IMR-90 (cell line): ENCODE measurements at regions of chr3 and their contacts with region 1.

Region 1: GRCh38 chr3:64345371-64345770 is 120.1 kb upstream of the PRICKLE2 start:
- DNase-seq: peak; percentile 89
- ATAC-seq: peak; percentile 4
- H3K4me3 ChIP-seq: no peak overlapping the region
- H3K27ac ChIP-seq: peak overlapping the region; percentile 77
- H3K4me1 ChIP-seq: peaks cover 30% of the 10 kb centered on the region
- H3K27me3 ChIP-seq: no peaks in the 10 kb centered on the region
- CTCF ChIP-seq: no peak
- POLR2A ChIP-seq: no peak
- RAD21 ChIP-seq: no peak

Region 2: DNA sequence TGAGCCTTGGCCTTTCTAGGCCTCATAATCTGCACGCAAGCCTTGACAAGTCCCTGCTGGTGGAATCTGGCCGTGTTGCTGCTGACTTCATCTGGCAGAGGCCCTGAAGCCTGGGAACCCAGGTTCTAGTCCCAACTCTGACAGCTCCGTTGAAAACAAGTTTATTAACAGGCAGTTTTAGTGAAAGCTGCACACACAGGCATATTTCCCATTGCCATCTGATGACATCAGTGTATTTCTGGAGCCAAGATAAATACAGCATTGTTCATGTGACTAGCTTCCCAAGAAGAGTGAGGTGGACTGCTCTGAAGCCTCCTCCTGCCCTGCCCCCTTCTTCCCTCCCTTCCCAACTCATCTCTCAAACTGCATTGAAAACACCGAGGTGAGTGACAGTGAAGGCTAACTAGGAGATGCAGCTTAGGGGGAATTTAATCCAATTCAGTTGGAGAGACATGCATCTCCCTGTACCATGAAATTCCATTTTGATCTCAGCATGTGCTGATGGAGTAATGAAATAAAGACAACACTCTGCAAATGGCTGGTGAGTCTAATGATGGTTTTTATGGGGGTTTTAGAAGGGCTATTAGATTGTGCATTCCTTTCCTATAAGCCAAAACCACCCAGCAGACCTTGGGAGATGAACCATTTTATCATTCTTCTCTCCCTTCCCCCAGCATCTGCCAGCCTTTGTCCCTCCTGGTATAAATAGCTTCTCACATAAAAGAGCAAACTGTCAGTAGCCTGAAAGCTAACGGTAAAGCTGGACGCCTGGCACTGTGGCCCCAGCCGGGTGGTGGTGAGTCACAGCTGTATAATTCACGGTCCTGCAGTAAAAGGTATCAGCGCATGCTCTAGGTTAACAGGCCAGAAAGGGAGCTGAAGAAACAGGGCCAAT is 158.1 kb before region 1 on chr3:
- CTCF ChIA-PET with region 1: no interaction called
- POLR2A ChIA-PET with region 1: no interaction called
- dilution Hi-C with region 1: no loop called
- in situ Hi-C with region 1: no loop called
- intact Hi-C with region 1: loop called (anchors 5 kb)
- DNase-seq: peak; percentile 99
- ATAC-seq: peak; percentile 62
- H3K4me3 ChIP-seq: no peak overlapping the region
- H3K27ac ChIP-seq: peak overlapping the region; percentile 86
- H3K4me1 ChIP-seq: peaks cover 32% of the 10 kb centered on the region
- H3K27me3 ChIP-seq: no peaks in the 10 kb centered on the region
- CTCF ChIP-seq: 0 out of 2 replicates have a peak, but pooled peaks have one; percentile 5
- POLR2A ChIP-seq: peak; percentile 45; the same call in 1 of the 2 replicates
- RAD21 ChIP-seq: peak; percentile 25; the same call in 1 of the 2 replicates

Region 3: GRCh38 chr3:64224826-64225610 is 120.4 kb before region 1 on chr3 and contains the start of gene PRICKLE2:
- CTCF ChIA-PET with region 1: no interaction called
- POLR2A ChIA-PET with region 1: no interaction called
- dilution Hi-C with region 1: no loop called
- in situ Hi-C with region 1: no loop called
- intact Hi-C with region 1: no loop called
- DNase-seq: peak; percentile 96
- ATAC-seq: peak; percentile 73
- H3K4me3 ChIP-seq: peak within 1 kb of the TSS; percentile 38
- H3K27ac ChIP-seq: peak within 1 kb of the TSS; percentile 89
- H3K4me1 ChIP-seq: peaks cover 32% of the 10 kb centered on the region
- H3K27me3 ChIP-seq: no peaks in the 10 kb centered on the region
- CTCF ChIP-seq: peak; percentile 49
- POLR2A ChIP-seq: peak; percentile 67
- RAD21 ChIP-seq: peak; percentile 70
- total RNA-seq, gene PRICKLE2: 14.2 and 16.7 TPM in 2 replicates

Region 4: GRCh38 chr3:64291345-64291744 is 54.0 kb before region 1 on chr3:
- CTCF ChIA-PET with region 1: no interaction called
- POLR2A ChIA-PET with region 1: no interaction called
- dilution Hi-C with region 1: no loop called
- in situ Hi-C with region 1: no loop called
- intact Hi-C with region 1: loop called (anchors 2 kb)
- DNase-seq: peak; percentile 93
- ATAC-seq: peak; percentile 67
- H3K4me3 ChIP-seq: no peak overlapping the region
- H3K27ac ChIP-seq: peak overlapping the region; percentile 57
- H3K4me1 ChIP-seq: peaks cover 9% of the 10 kb centered on the region
- H3K27me3 ChIP-seq: no peaks in the 10 kb centered on the region
- CTCF ChIP-seq: no peak
- POLR2A ChIP-seq: no peak
- RAD21 ChIP-seq: no peak

Region 5: DNA sequence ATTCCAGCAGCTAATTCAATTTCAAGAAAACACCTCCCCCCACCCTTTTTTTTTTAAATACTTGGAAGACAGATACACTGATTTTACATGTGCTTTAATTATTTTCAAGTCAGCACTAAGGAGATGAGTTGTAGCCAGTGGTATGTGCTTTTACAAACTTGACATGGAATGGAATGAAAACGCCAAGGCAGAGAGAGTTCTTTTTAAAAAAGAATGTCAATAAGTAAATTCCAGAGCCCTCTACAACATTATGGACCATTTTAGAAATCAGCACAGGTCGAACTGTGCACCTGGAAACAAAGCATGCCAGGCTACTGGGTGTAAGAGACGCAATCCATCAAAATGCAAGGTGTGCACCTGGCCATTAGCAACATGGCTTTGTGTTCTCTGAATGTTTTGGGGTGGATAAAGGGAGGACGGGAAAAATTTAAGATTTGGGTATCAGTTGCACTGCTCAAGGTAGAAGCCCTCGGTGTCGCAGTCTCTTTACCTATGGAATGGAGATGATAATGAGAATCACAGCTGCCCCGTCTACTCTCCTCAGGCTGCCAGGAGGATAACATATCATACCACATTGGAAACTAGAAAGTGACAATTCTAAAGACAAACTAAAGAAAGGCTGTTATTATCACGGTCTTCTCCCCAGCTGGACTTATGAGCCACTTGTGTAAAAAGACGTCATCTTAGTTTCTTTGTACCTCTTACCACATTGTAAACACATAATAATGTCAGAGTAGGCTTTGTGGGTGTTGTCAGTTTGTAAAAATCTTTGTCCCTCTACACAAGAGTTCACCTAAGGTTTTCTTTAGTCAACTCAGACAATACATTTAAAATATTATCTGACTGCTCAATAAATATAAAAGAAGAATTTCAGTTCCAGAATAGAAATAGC is 12.7 kb before region 1 on chr3:
- CTCF ChIA-PET with region 1: no interaction called
- POLR2A ChIA-PET with region 1: no interaction called
- dilution Hi-C with region 1: no loop called
- in situ Hi-C with region 1: no loop called
- intact Hi-C with region 1: no loop called
- DNase-seq: peak; percentile 71
- ATAC-seq: peak; percentile 92
- H3K4me3 ChIP-seq: no peak overlapping the region
- H3K27ac ChIP-seq: peak overlapping the region; percentile 82
- H3K4me1 ChIP-seq: peaks cover 7% of the 10 kb centered on the region
- H3K27me3 ChIP-seq: no peaks in the 10 kb centered on the region
- CTCF ChIP-seq: no peak
- POLR2A ChIP-seq: no peak
- RAD21 ChIP-seq: no peak

Region 6: GRCh38 chr3:64362002-64362940 is 16.9 kb after region 1 on chr3:
- CTCF ChIA-PET with region 1: no interaction called
- POLR2A ChIA-PET with region 1: no interaction called
- dilution Hi-C with region 1: no loop called
- in situ Hi-C with region 1: no loop called
- intact Hi-C with region 1: no loop called
- DNase-seq: peak; percentile 50
- ATAC-seq: no peak
- H3K4me3 ChIP-seq: no peak overlapping the region
- H3K27ac ChIP-seq: no peak overlapping the region
- H3K4me1 ChIP-seq: no peaks in the 10 kb centered on the region
- H3K27me3 ChIP-seq: no peaks in the 10 kb centered on the region
- CTCF ChIP-seq: no peak
- POLR2A ChIP-seq: no peak
- RAD21 ChIP-seq: no peak

Region 7: DNA sequence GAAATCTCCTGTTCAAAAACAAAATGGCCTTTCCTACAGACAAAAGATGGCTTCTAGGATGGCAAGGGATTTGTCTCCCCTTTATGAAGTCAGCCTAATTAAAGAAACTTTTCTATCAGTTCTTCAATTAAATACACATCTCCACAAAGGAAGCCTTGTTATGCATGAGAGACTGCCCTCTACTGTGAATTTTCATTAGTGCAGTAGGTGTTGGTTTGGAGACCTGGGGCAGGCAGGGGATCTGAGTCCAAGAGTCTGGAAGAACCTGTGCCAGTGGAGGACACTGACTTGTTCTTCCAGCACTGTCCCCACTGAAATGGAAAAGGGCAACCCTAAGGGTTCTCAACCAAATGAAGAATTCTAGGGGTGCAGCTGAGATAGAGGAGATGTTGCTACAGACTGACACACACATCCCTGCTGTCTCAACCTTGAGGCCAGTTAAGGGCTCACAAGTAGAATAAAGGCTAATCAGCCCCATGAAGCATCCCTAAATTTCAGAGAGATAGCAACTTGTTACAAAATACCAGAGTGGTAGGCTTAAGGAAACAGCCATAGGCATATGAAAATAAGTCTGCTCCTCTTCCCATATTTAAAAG is 53.9 kb after region 1 on chr3:
- CTCF ChIA-PET with region 1: no interaction called
- POLR2A ChIA-PET with region 1: no interaction called
- dilution Hi-C with region 1: no loop called
- in situ Hi-C with region 1: no loop called
- intact Hi-C with region 1: loop called (anchors 5 kb)
- DNase-seq: peak; percentile 70
- ATAC-seq: peak; percentile 89
- H3K4me3 ChIP-seq: no peak overlapping the region
- H3K27ac ChIP-seq: no peak overlapping the region
- H3K4me1 ChIP-seq: peaks cover 2% of the 10 kb centered on the region
- H3K27me3 ChIP-seq: no peaks in the 10 kb centered on the region
- CTCF ChIP-seq: peak; percentile 85
- POLR2A ChIP-seq: no peak
- RAD21 ChIP-seq: peak; percentile 95

Region 8: GRCh38 chr3:64462203-64462602 is 116.8 kb after region 1 on chr3:
- CTCF ChIA-PET with region 1: no interaction called
- POLR2A ChIA-PET with region 1: no interaction called
- dilution Hi-C with region 1: no loop called
- in situ Hi-C with region 1: no loop called
- intact Hi-C with region 1: loop called (anchors 5 kb)
- DNase-seq: peak; percentile 93
- ATAC-seq: peak; percentile 73
- H3K4me3 ChIP-seq: peak overlapping the region; percentile 28; the same call in 1 of the 2 replicates
- H3K27ac ChIP-seq: peak overlapping the region; percentile 95
- H3K4me1 ChIP-seq: peaks cover 21% of the 10 kb centered on the region
- H3K27me3 ChIP-seq: no peaks in the 10 kb centered on the region
- CTCF ChIP-seq: no peak
- POLR2A ChIP-seq: no peak
- RAD21 ChIP-seq: no peak